WTC11 (cell line): ENCODE measurements at regions of chr5 and their contacts with region 1.

Region 1: GRCh38 chr5:170404402-170404801 is 15.2 kb upstream of the KCNMB1 start:
- DNase-seq: no peak
- ATAC-seq: no peak
- H3K4me3 Mint-ChIP-seq: no peak overlapping the region
- H3K27ac Mint-ChIP-seq: no peak overlapping the region
- H3K4me1 Mint-ChIP-seq: peaks cover 60% of the 10 kb centered on the region
- H3K27me3 Mint-ChIP-seq: 0 out of 2 replicates have a peak, but pooled peaks cover 3% of the 10 kb centered on the region
- CTCF ChIP-seq: no peak

Region 2: GRCh38 chr5:170267431-170268152 is 136.8 kb before region 1 on chr5:
- CTCF ChIA-PET with region 1: interaction called, 35 read pairs
- POLR2A ChIA-PET with region 1: no interaction called
- DNase-seq: peak; percentile 84
- ATAC-seq: peak; percentile 88
- H3K4me3 Mint-ChIP-seq: no peak overlapping the region
- H3K27ac Mint-ChIP-seq: no peak overlapping the region
- H3K4me1 Mint-ChIP-seq: peaks cover 57% of the 10 kb centered on the region
- H3K27me3 Mint-ChIP-seq: peaks cover 4% of the 10 kb centered on the region; the same call in 1 of the 2 replicates
- CTCF ChIP-seq: peak; percentile 81

Region 3: GRCh38 chr5:170333161-170333910 is 71.1 kb before region 1 on chr5:
- CTCF ChIA-PET with region 1: interaction called, 33 read pairs
- POLR2A ChIA-PET with region 1: no interaction called
- DNase-seq: peak; percentile 61
- ATAC-seq: peak; percentile 40
- H3K4me3 Mint-ChIP-seq: peak overlapping the region; percentile 47
- H3K27ac Mint-ChIP-seq: peak overlapping the region; percentile 96
- H3K4me1 Mint-ChIP-seq: peaks cover 75% of the 10 kb centered on the region
- H3K27me3 Mint-ChIP-seq: no peaks in the 10 kb centered on the region; the same call in 1 of the 2 replicates
- CTCF ChIP-seq: no peak

Region 4: GRCh38 chr5:170348137-170348633 is 56.2 kb before region 1 on chr5:
- CTCF ChIA-PET with region 1: interaction called, 24 read pairs
- POLR2A ChIA-PET with region 1: no interaction called
- DNase-seq: no peak
- ATAC-seq: no peak
- H3K4me3 Mint-ChIP-seq: no peak overlapping the region
- H3K27ac Mint-ChIP-seq: no peak overlapping the region
- H3K4me1 Mint-ChIP-seq: peaks cover 46% of the 10 kb centered on the region
- H3K27me3 Mint-ChIP-seq: peaks cover 7% of the 10 kb centered on the region
- CTCF ChIP-seq: no peak

Region 5: DNA sequence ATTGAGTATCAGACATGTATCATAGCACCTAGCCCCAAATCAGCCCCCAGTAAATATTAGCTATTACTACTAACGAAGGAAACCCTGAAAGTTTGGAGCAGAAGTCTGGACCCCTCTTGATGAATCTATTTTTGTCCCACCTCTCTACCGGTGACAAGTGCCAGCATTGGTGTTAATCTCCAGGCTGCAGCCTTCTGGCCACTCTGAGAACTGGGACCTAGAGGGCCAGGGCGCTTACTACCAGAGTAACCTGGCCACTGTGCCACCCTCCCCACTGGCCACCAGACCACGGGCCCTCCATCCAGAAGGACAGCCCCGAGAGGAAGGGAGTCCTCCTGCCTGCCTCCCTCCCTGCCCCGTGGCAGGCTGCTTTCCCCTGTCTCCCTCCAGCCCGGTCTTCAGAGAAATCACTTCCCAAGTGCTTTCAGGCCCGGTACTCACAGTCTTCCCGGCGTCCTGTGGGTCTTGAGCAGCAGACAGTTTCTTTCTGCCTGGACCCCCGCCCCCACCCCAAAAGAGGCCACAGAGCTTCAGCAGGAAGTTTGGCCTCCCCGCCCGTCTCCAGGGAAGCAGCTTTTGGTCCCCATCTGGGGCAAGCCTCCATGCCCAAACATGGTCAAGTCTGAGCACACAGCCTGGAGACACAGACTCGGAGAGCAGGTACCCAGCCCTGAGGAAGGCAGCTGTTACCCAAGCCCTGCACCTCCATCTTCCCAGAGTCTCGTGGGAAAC is 15.4 kb before region 1 on chr5 and contains the start of gene KCNMB1:
- CTCF ChIA-PET with region 1: interaction called, 32 read pairs
- POLR2A ChIA-PET with region 1: no interaction called
- DNase-seq: no peak
- ATAC-seq: peak; percentile 58
- H3K4me3 Mint-ChIP-seq: no peak within 1 kb of the TSS
- H3K27ac Mint-ChIP-seq: no peak within 1 kb of the TSS
- H3K4me1 Mint-ChIP-seq: peaks cover 60% of the 10 kb centered on the region
- H3K27me3 Mint-ChIP-seq: no peaks in the 10 kb centered on the region; the same call in none of the 2 replicates
- CTCF ChIP-seq: no peak
- total RNA-seq, gene KCNMB1: 0.16 to 0.24 TPM (median 0.21 TPM) in 3 replicates